Activated CD4-positive, alpha-beta memory T cell treated with anti-CD3 and anti-CD28 coated beads for 36 hours (primary cell): ENCODE measurements at regions of chr7 and their contacts with region 1.

Region 1: GRCh38 chr7:99143853-99144672 is at the start of gene SMURF1:
- DNase-seq: peak; percentile 77
- H3K4me3 Mint-ChIP-seq: peak within 1 kb of the TSS; percentile 89
- H3K27ac Mint-ChIP-seq: peak within 1 kb of the TSS; percentile 83
- H3K4me1 Mint-ChIP-seq: peaks cover 36% of the 10 kb centered on the region
- H3K27me3 Mint-ChIP-seq: peaks cover 2% of the 10 kb centered on the region
- total RNA-seq, gene SMURF1: 14.0 to 16.2 TPM

Region 2: GRCh38 chr7:98930921-98931320 is 213.1 kb before region 1 on chr7:
- CTCF ChIA-PET with region 1: no interaction called
- POLR2A ChIA-PET with region 1: no interaction called
- intact Hi-C with region 1: loop called (anchors 2 kb)
- DNase-seq: peak; percentile 52
- H3K4me3 Mint-ChIP-seq: peak overlapping the region; percentile 53
- H3K27ac Mint-ChIP-seq: peak overlapping the region; percentile 82
- H3K4me1 Mint-ChIP-seq: peaks cover 20% of the 10 kb centered on the region
- H3K27me3 Mint-ChIP-seq: no peaks in the 10 kb centered on the region

Region 3: DNA sequence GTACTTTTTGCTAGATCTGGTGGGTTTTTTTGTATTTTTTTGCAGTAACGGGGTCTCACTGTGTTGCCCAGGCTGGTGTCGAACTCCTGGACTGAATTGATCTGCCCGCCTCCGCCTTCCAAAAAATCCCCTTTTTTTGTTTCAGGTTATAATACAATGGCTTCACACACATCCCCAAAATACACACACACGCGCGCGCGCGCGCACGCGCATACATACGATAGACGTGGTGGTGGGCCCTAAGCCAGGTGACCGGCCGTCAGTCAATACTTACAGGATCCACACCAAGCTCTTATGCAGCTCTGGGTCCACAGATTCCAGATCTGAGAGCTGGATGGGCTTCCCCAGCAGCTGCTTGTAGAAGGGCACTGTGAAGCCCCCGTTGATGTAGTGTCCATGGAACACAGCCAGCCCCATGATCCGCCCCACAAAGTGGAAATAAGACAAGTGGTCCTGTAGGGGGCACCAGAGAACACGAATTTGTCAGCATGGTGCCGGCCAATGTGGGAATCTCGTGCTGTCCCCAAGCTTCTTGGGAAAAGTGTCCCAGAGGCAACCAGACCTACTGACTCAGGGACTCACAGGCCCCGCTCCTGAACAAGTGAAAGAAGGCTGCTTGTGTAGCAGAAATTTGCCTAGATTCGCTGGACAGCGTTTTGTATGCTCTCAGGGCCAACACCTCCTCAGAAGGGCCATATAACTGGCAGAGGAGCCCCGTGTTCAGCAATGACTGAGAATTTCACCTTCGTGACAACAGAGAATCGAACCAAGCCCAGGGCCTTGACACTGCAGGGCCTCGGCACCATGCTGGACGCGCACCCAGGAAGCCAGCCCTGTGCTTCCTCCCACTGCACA is 103.7 kb before region 1 on chr7:
- CTCF ChIA-PET with region 1: no interaction called
- POLR2A ChIA-PET with region 1: no interaction called
- intact Hi-C with region 1: loop called (anchors 5 kb)
- DNase-seq: peak; percentile 67
- H3K4me3 Mint-ChIP-seq: no peak overlapping the region
- H3K27ac Mint-ChIP-seq: peak overlapping the region; percentile 55
- H3K4me1 Mint-ChIP-seq: no peaks in the 10 kb centered on the region
- H3K27me3 Mint-ChIP-seq: no peaks in the 10 kb centered on the region

Region 4: GRCh38 chr7:99083733-99084132 is 60.3 kb before region 1 on chr7:
- CTCF ChIA-PET with region 1: no interaction called
- POLR2A ChIA-PET with region 1: no interaction called
- intact Hi-C with region 1: no loop called
- DNase-seq: no peak
- H3K4me3 Mint-ChIP-seq: no peak overlapping the region
- H3K27ac Mint-ChIP-seq: no peak overlapping the region
- H3K4me1 Mint-ChIP-seq: peaks cover 27% of the 10 kb centered on the region
- H3K27me3 Mint-ChIP-seq: no peaks in the 10 kb centered on the region

Region 5: DNA sequence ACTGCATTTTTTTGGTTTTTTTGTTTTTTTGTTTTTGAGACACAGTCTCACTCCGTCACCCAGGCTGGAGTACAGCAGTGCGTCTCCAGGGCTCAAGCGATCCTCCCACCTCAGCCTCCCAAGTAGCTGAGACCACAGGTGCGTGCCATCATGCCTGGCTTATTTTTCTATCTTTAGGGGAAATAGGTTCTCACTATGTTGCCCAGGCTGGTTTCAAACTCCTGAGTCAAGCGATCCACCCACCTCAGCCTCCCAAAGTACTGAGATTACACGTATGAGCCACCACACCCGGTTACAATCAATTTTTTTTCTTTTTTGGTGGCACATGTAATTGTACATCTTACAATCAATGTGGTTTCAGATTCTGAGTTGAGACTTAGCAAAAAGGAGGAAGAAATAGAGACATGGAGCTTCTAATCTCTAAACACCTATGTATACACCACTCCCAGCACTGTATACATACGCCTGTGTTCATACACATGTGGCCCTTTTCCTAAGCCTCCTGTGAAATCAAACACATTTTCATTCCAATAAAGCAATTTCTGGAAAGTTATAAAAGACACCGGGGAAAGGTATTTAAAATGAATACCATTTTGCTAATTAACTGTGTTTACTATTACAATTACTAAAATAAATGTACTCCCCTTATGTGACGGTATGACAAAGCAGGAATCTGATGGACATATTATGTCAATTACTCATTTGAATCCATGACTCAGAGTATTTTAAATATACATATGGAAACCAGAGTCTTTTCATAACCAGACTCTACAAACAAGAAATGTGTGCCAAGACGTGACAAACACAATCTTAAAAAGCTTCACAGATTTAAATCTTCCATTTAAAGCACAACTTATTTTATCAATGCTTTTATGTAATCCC is 41.0 kb before region 1 on chr7:
- CTCF ChIA-PET with region 1: no interaction called
- POLR2A ChIA-PET with region 1: no interaction called
- intact Hi-C with region 1: loop called (anchors 1 kb)
- DNase-seq: peak; percentile 76
- H3K4me3 Mint-ChIP-seq: peak overlapping the region; percentile 10
- H3K27ac Mint-ChIP-seq: peak overlapping the region; percentile 73
- H3K4me1 Mint-ChIP-seq: peaks cover 69% of the 10 kb centered on the region
- H3K27me3 Mint-ChIP-seq: no peaks in the 10 kb centered on the region

Region 6: GRCh38 chr7:99374103-99375064 is 230.3 kb after region 1 on chr7 and contains the start of gene ARPC1B:
- CTCF ChIA-PET with region 1: no interaction called
- POLR2A ChIA-PET with region 1: no interaction called
- intact Hi-C with region 1: loop called (anchors 1 kb)
- DNase-seq: peak; percentile 92
- H3K4me3 Mint-ChIP-seq: peak within 1 kb of the TSS; percentile 84
- H3K27ac Mint-ChIP-seq: peak within 1 kb of the TSS; percentile 86
- H3K4me1 Mint-ChIP-seq: peaks cover 32% of the 10 kb centered on the region
- H3K27me3 Mint-ChIP-seq: no peaks in the 10 kb centered on the region
- total RNA-seq, gene ARPC1B: 432 to 435 TPM

Region 7: DNA sequence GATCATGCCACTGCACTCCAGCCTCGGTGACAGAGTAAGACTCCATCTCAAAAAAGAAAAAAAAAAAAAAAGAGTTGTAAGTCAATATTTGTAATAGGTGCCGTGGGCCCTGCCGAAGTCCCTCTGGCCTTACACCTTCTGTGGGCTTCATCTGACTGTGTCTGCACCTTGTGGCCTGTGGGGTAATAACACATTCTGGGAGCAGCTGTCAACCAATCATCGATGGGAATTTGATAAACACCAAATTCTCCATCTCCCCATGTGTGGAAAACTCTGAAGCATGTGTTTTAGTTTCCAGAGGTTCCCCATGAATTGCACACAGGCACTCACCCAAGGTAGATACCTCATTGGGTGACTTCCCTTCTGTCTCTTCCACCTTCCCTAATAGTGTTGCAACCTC is 345.2 kb after region 1 on chr7:
- CTCF ChIA-PET with region 1: no interaction called
- POLR2A ChIA-PET with region 1: no interaction called
- intact Hi-C with region 1: no loop called
- DNase-seq: no peak
- H3K4me3 Mint-ChIP-seq: no peak overlapping the region
- H3K27ac Mint-ChIP-seq: no peak overlapping the region
- H3K4me1 Mint-ChIP-seq: no peaks in the 10 kb centered on the region
- H3K27me3 Mint-ChIP-seq: no peaks in the 10 kb centered on the region